ENCODE measurements at regions of chr12 and their contacts with region 1.

Region 1: GRCh38 chr12:19739183-19739776 is 300.0 kb downstream of the AEBP2 start:
- H3K4me3 Mint-ChIP-seq: no peak overlapping the region
- H3K27ac Mint-ChIP-seq: no peak overlapping the region
- H3K4me1 Mint-ChIP-seq: no peaks in the 10 kb centered on the region
- H3K27me3 Mint-ChIP-seq: no peaks in the 10 kb centered on the region

Region 2: GRCh38 chr12:19757317-19757877 is 18.1 kb after region 1 on chr12:
- intact Hi-C with region 1: no loop called
- H3K4me3 Mint-ChIP-seq: no peak overlapping the region
- H3K27ac Mint-ChIP-seq: no peak overlapping the region
- H3K4me1 Mint-ChIP-seq: peaks cover 19% of the 10 kb centered on the region
- H3K27me3 Mint-ChIP-seq: no peaks in the 10 kb centered on the region

Region 3: DNA sequence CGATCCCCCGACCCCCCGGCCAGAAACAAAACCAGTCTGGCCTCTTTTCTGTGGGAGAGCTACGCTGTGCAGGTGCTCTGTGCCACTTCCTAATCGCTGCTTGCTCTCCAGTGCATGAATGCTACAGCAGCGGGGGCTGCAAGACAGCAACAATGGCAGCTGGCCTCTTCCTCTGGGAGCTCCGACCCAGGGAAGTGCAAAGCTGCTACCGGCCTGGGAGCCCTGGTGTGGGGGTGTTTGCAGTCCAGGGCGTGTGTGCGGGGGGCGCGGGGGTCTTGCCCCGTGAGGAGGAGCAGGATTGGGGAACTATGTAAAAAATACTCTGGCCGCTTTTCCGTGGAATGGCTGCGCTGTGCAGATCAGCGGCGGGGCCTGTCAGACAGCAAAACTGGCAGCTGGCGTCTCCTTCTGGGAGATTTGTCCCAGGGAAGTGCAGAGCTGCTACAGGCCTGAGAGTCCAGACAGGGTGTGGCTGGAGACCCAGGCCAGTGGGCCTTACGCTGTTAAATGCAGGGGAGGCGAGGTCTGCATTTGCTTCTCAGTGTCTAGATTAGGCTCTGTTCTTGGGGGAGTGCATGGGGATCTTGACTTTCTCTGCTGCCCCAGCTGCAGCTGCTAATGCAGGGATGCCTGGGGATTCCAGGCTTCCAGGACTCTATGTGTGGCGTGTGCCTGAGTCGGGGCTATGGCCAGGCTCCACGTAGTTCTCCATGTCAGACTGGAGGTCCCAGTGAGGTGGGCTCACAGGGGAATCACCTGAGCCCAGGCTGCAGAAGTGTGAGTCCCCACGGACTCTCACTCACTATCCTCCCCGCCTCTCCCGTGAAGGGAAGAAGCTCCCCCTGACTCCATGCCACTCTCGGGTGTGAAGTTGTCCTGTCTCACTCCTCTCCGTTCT is 44.5 kb after region 1 on chr12:
- intact Hi-C with region 1: no loop called
- H3K4me3 Mint-ChIP-seq: peak overlapping the region; percentile 14
- H3K27ac Mint-ChIP-seq: no peak overlapping the region
- H3K4me1 Mint-ChIP-seq: peaks cover 4% of the 10 kb centered on the region
- H3K27me3 Mint-ChIP-seq: no peaks in the 10 kb centered on the region

Region 4: GRCh38 chr12:21169878-21170472 is 1430.7 kb after region 1 on chr12:
- intact Hi-C with region 1: loop called (anchors 5 kb)
- H3K4me3 Mint-ChIP-seq: no peak overlapping the region
- H3K27ac Mint-ChIP-seq: no peak overlapping the region
- H3K4me1 Mint-ChIP-seq: no peaks in the 10 kb centered on the region
- H3K27me3 Mint-ChIP-seq: no peaks in the 10 kb centered on the region

Measured in dendritic cell treated with granulocyte-macrophage colony-stimulating factor and Interleukin-4, amounts not matched to agents 40 ng/mL and 50 ng/mL, for 4 days (primary cell).